Esophagus muscularis mucosa (tissue), 4 donors: ENCODE measurements at regions of chr22 and their contacts with region 1.

Region 1: GRCh38 chr22:35627264-35628041 is 10.3 kb upstream of the MB start:
- DNase-seq: peak; percentile 97
- H3K4me3 ChIP-seq: peak overlapping the region; percentile 58 to 74 (median 61)
- H3K27ac ChIP-seq: peak overlapping the region; percentile 83 to 92 (median 88)
- H3K4me1 ChIP-seq: peaks cover 24 to 49% (median 43%) of the 10 kb centered on the region in 4 donors
- H3K27me3 ChIP-seq: no peaks in the 10 kb centered on the region
- CTCF ChIP-seq: peak; percentile 59 to 78 (median 65)
- EP300 ChIP-seq: no peak
- POLR2A ChIP-seq: no peak

Region 2: GRCh38 chr22:35454416-35455054 is 172.9 kb before region 1 on chr22:
- intact Hi-C with region 1: no loop called
- DNase-seq: no peak
- H3K4me3 ChIP-seq: no peak overlapping the region
- H3K27ac ChIP-seq: no peak overlapping the region
- H3K4me1 ChIP-seq: peaks cover 0 to 12% (median 4%) of the 10 kb centered on the region in 4 donors
- H3K27me3 ChIP-seq: no peaks in the 10 kb centered on the region
- CTCF ChIP-seq: peak; percentile 26 to 42 (median 39)
- EP300 ChIP-seq: no peak
- POLR2A ChIP-seq: no peak

Region 3: DNA sequence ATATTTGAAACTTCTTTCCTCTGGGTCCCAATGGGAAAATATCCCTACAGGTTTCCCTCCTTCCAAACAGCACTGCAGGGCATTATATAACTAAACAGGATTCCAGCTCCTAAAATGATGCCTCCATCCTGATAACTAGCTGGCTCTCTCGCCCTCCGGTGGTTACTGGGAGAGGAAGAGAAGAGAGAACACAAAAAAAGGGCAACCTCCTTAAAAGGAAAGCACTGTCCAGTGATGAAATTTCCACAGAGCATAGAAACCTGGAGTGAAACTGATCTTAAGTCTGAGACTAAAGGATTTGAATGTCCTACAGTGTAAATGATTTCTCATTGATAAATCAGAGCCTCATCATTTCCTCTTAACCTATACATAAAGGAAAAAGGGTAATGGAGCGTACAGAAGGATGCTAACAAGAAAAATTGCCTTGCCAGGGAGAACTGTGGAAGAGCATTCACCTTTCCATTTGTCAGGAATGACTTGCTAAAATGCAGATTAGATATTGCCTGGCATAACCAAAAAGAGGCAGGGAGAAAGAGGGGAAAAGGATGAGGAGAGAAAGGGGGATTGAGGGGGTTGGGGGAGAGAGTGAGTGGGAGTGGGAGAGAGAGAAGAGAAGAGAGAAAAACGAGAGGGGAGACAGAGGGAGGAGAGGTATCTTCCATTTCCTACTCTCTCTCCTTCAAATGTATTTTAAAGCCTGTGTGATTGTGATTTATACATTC is 211.6 kb after region 1 on chr22:
- intact Hi-C with region 1: loop called (anchors 5 kb)
- DNase-seq: no peak
- H3K4me3 ChIP-seq: peak overlapping the region; percentile 47 to 59 (median 56)
- H3K27ac ChIP-seq: peak overlapping the region; percentile 77 to 82 (median 80)
- H3K4me1 ChIP-seq: peaks cover 77 to 86% (median 83%) of the 10 kb centered on the region in 4 donors
- H3K27me3 ChIP-seq: no peaks in the 10 kb centered on the region
- CTCF ChIP-seq: peak; percentile 48 to 68 (median 59)
- EP300 ChIP-seq: no peak
- POLR2A ChIP-seq: no peak

Region 4: GRCh38 chr22:35921777-35922176 is 294.3 kb after region 1 on chr22:
- intact Hi-C with region 1: loop called (anchors 5 kb)
- DNase-seq: no peak
- H3K4me3 ChIP-seq: no peak overlapping the region
- H3K27ac ChIP-seq: peak overlapping the region; percentile 64 to 73 (median 66)
- H3K4me1 ChIP-seq: peaks cover 40 to 73% (median 67%) of the 10 kb centered on the region in 4 donors
- H3K27me3 ChIP-seq: no peaks in the 10 kb centered on the region
- CTCF ChIP-seq: peak; percentile 60 to 77 (median 66)
- EP300 ChIP-seq: no peak
- POLR2A ChIP-seq: no peak

Region 5: DNA sequence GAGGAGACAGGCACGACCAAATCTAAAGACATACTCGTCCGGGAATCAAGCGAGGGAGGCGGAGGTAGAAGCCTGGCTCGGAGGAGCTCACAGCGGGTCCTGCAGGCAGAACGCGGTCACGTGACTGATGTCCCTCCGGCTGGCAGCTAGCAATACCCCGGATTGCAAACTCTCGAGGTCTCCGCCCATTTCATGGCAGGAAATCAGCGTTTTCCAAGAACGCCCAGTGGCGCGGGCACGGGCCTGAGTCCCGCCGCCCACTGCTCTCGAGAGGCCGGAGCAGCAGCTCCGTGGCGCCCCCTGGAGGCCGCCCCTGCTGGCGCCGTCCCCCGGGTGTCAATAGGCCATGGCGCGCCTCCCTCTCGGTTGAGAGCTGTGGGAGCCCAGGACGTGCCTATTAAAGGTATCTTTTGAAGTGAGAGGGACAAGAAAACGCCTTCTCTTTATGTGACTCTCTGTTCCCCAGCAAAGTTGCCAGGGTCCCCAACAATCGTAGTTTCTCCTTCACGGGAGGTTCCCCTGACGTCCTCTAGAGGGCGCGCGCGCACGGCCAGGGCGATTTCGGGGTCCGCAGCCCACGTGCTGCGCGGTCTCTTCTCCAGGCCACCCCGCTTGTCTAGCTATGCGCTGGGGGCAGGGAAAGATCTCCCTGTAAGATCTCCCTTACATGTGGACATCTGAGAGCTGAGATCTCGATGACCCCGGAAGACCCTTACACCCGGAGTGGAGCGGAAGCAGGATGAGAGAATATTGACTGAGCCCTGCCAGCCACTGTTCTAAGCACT is 438.5 kb after region 1 on chr22:
- intact Hi-C with region 1: loop called (anchors 10 kb)
- DNase-seq: peak; percentile 95
- H3K4me3 ChIP-seq: peak overlapping the region; percentile 48 to 72 (median 58)
- H3K27ac ChIP-seq: peak overlapping the region; percentile 81 to 91 (median 88)
- H3K4me1 ChIP-seq: peaks cover 6 to 18% (median 14%) of the 10 kb centered on the region in 4 donors
- H3K27me3 ChIP-seq: no peaks in the 10 kb centered on the region
- CTCF ChIP-seq: peak in 2 of 3 experiments; percentile 99 to 100
- EP300 ChIP-seq: no peak
- POLR2A ChIP-seq: no peak

Region 6: GRCh38 chr22:36129486-36130388 is 502.3 kb after region 1 on chr22:
- intact Hi-C with region 1: loop called (anchors 5 kb)
- DNase-seq: no peak
- H3K4me3 ChIP-seq: no peak overlapping the region
- H3K27ac ChIP-seq: no peak overlapping the region
- H3K4me1 ChIP-seq: no peaks in the 10 kb centered on the region
- H3K27me3 ChIP-seq: no peaks in the 10 kb centered on the region
- CTCF ChIP-seq: no peak
- EP300 ChIP-seq: no peak
- POLR2A ChIP-seq: no peak